PC-9 (cell line): ENCODE measurements at regions of chrX and their contacts with region 1.

Region 1: DNA sequence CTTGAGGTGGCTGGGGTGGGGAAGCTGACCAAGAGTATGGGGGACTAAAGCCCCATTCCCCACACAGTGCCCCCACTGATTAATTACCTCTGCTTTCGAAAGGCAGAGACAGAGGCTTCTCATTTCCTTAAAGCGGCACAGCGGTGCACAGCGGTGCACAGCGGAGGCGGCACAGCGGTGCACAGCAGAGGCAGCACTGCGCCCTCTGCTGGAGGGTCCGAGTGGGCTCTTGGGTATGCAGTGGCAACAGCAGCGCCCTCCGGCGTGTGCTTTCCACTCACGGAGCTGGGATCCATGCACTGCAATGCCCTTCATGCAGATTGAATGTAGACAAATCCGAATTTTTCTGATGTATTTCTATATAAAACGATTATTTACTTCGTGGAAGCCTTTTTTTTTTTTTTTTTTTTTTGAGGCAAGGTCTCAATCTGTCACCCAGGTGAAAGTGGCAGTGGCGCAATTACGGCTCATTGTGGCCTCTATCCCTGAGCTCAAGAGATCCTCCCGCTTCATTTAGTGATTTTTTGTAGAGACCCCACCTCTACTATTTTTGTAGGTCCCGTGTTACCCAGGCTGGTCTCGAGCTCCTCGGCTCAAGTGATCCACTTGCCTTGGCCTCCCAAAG is 19.7 kb upstream of the PRPS2 start:
- DNase-seq: peak in 1 of 2 experiments; percentile 31
- H3K4me3 ChIP-seq: no peak overlapping the region
- H3K27ac ChIP-seq: no peak overlapping the region
- H3K4me1 ChIP-seq: no peaks in the 10 kb centered on the region; the same call in 1 of the 2 replicates
- H3K27me3 ChIP-seq: no peaks in the 10 kb centered on the region
- CTCF ChIP-seq: peak; percentile 67

Region 2: DNA sequence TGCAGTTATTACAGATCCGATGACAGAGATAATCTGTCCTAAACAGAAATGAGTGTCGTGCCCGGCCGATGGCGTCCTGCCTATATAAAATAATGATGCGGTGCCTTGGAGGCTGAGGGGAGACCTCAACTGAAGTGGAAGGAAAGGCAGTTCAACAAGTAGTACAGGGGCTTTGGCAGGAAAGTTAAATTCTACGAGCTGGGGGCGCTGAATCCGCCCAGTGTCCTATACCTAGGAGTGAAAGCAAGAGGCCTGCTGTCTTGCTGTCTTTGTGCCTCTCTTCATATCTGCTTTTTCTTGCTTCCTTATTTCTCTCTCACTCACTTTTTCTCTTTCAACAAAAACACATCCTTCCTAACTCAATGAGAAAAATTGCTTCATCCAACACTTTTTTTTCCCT is 62.5 kb before region 1 on chrX:
- CTCF ChIA-PET with region 1: interaction called, 14 read pairs
- POLR2A ChIA-PET with region 1: no interaction called
- intact Hi-C with region 1: loop called (anchors 1 kb)
- DNase-seq: peak in 1 of 2 experiments; percentile 27
- H3K4me3 ChIP-seq: no peak overlapping the region
- H3K27ac ChIP-seq: no peak overlapping the region
- H3K4me1 ChIP-seq: no peaks in the 10 kb centered on the region
- H3K27me3 ChIP-seq: no peaks in the 10 kb centered on the region
- CTCF ChIP-seq: 0 out of 2 replicates have a peak, but pooled peaks have one; percentile 32